ENCODE measurements at regions of chr14 and their contacts with region 1.

Region 1: GRCh38 chr14:44961604-44962333 is at the starts of genes KLHL28 and TOGARAM1:
- DNase-seq: peak; percentile 100
- H3K4me3 Mint-ChIP-seq: no peak within 1 kb of the TSS
- H3K27ac Mint-ChIP-seq: no peak within 1 kb of the TSS
- H3K4me1 Mint-ChIP-seq: peaks cover 24% of the 10 kb centered on the region
- H3K27me3 Mint-ChIP-seq: no peaks in the 10 kb centered on the region
- CTCF ChIP-seq: no peak
- total RNA-seq, gene KLHL28: 11.2 and 13.8 TPM in 2 replicates
- total RNA-seq, gene TOGARAM1: 12.0 and 15.8 TPM in 2 replicates

Region 2: GRCh38 chr14:43249127-43249526 is 1712.6 kb before region 1 on chr14:
- CTCF ChIA-PET with region 1: no interaction called
- POLR2A ChIA-PET with region 1: no interaction called
- intact Hi-C with region 1: no loop called
- DNase-seq: no peak
- H3K4me3 Mint-ChIP-seq: no peak overlapping the region
- H3K27ac Mint-ChIP-seq: no peak overlapping the region
- H3K4me1 Mint-ChIP-seq: no peaks in the 10 kb centered on the region
- H3K27me3 Mint-ChIP-seq: no peaks in the 10 kb centered on the region
- CTCF ChIP-seq: no peak

Region 3: DNA sequence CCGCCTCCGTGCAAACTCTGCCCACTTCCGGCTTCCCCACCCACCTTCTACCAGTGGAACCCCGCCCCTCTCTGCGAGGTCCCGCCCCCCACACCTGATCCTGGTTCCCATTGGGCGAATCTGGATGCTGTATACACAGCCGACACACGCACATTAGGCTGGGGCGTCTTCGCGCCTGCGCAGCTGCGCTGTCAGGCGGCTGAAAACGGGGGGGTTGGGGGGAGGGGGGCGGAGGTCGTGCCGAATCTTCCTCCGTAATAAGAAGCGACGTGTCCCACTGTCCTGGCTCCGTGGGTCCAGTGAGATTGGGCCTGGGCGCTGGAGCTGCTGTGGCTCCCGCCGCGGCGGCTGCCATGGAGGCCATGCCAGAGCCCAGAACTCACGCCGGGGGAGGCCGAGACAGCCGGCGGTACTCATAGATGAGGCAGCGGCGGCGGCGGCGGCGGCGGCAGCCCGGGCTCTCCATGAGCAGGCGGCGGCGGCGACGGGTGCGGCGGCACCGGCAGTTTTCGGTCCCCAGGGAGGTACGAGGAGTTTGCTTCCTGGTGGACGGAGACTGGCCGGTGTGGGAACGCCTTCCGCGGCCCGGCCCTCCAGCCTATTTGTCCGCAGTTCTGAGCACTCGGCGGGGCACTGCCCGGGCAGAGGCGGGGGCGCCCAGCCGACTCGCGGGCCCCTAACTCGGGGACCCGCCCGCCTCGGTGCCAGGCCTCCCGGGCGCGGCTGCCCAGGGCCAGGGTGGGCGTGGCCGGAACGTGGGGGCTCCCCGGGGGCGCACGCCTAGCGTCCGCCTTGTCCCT is 64.5 kb before region 1 on chr14:
- CTCF ChIA-PET with region 1: interaction called, 5 read pairs
- POLR2A ChIA-PET with region 1: interaction called, 23 read pairs
- intact Hi-C with region 1: no loop called
- DNase-seq: peak; percentile 95
- H3K4me3 Mint-ChIP-seq: peak overlapping the region; percentile 88
- H3K27ac Mint-ChIP-seq: peak overlapping the region; percentile 91
- H3K4me1 Mint-ChIP-seq: peaks cover 6% of the 10 kb centered on the region
- H3K27me3 Mint-ChIP-seq: no peaks in the 10 kb centered on the region
- CTCF ChIP-seq: no peak

Region 4: DNA sequence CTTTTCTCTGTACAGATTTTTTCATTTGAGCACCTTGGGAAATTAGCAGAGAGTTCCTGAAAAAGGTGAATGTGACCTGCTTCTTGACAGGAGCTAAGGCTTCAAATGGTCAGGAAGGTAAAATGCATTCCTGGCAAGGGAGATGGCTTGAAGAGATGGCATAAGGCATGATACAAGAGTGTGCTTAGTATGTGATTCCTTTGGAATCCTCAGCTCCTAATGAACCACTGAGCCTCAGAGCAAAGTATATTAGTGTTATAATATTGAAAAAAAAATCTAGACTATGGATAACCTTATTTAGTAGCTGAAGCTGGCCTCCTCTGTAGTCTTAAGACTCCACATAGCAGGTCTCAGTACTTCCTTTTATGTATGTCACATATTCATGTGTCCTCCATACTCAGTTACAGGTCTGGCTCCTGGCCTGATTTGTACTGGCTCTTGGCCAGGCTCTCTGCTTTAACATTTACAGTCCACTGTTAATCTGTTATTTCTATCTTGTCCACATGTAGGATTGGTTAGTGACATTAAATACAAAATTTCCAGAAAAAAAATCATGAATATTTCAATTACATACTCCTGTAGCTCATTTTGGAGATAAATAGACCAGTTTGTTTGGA is 18.1 kb after region 1 on chr14:
- CTCF ChIA-PET with region 1: interaction called, 10 read pairs
- POLR2A ChIA-PET with region 1: interaction called, 23 read pairs
- intact Hi-C with region 1: no loop called
- DNase-seq: no peak
- H3K4me3 Mint-ChIP-seq: no peak overlapping the region
- H3K27ac Mint-ChIP-seq: no peak overlapping the region
- H3K4me1 Mint-ChIP-seq: peaks cover 22% of the 10 kb centered on the region
- H3K27me3 Mint-ChIP-seq: no peaks in the 10 kb centered on the region
- CTCF ChIP-seq: no peak

Region 5: GRCh38 chr14:45089813-45090212 is 128.0 kb after region 1 on chr14:
- CTCF ChIA-PET with region 1: no interaction called
- POLR2A ChIA-PET with region 1: interaction called, 116 read pairs
- intact Hi-C with region 1: loop called (anchors 2 kb)
- DNase-seq: peak; percentile 64
- H3K4me3 Mint-ChIP-seq: peak overlapping the region; percentile 7
- H3K27ac Mint-ChIP-seq: peak overlapping the region; percentile 28
- H3K4me1 Mint-ChIP-seq: peaks cover 51% of the 10 kb centered on the region
- H3K27me3 Mint-ChIP-seq: no peaks in the 10 kb centered on the region
- CTCF ChIP-seq: no peak

Region 6: DNA sequence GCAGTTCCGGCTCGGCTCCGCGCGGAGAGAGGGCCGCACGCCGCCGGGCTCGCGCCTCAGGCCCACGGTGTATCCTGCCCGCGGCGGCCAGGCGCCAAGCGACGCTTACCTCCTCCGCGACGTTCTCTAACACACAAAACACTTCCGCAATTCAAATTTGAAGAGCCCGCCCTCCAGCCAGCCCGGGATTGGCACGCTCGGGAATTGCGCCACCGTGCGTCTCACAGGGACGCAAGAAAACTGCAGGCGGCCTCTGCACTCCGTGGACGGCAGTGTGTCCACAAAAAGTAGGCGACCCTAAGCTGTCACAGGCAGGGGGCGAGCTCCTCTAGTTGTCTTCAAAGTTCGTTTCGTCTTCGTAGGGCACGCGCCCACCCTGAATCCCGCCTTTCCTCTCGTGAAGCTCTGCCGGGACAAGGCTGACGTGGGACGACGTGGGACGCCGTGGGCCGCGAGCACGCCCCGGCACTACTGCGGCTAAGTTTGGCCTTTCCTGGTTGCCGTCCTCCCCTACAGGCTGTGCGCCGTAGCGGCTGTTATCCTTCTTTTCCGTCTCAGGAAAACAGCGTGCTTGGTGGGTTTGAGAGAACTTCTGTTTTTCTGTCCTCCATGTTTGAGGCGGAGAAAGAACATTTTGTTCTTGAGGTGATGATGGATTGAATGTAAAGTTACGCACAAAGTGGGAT is 291.4 kb after region 1 on chr14 and contains the start of gene MIS18BP1:
- CTCF ChIA-PET with region 1: interaction called, 9 read pairs
- POLR2A ChIA-PET with region 1: interaction called, 111 read pairs
- intact Hi-C with region 1: loop called (anchors 2 kb)
- DNase-seq: peak; percentile 97
- H3K4me3 Mint-ChIP-seq: peak within 1 kb of the TSS; percentile 88
- H3K27ac Mint-ChIP-seq: peak within 1 kb of the TSS; percentile 99
- H3K4me1 Mint-ChIP-seq: peaks cover 11% of the 10 kb centered on the region
- H3K27me3 Mint-ChIP-seq: no peaks in the 10 kb centered on the region
- CTCF ChIP-seq: peak; percentile 80
- total RNA-seq, gene MIS18BP1: 24.2 and 31.6 TPM in 2 replicates

Measured in MCF 10A (cell line).